ENCODE measurements at regions of chr20 and their contacts with region 1.

Region 1: DNA sequence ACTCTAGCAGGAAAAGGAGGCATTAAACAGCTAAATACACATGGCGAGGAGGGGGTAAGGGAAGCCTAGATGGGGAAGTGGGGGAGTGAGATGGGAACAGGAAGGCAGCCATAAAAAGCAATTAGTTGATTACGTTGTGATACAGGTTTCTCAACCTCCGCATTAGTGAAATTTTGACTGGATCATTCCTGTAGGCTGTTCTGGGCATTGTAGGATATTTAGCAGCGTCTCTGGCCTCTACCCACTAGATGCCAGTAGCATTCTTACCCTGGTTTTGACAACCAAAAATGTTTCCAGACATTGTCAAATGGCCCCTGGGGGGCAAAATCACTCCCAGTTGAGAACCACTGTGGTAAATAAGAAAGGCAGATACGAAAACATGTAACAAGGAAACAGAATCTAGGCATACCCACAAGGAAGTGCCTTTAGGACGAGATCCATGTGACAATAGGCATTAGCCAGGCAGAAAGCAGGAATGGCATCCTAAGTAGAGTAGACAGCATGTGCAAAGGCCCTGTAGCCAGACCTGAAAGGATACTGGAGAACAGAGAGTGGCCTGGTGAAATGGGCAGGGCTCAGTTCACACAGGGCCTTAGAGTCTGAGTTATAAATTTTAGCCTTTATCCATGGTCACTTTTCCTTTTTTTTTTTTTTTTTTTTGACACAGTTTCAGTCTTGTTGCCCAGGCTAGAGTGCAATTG is 25.8 kb upstream of the PTPN1 start:
- DNase-seq: peak in 1 of 14 experiments; percentile 20
- ATAC-seq: no peak
- H3K4me3 ChIP-seq: peak overlapping the region; percentile 60
- H3K4me3 Mint-ChIP-seq: peak overlapping the region; percentile 91
- H3K27ac ChIP-seq: peak overlapping the region in 1 of 2 donors; percentile 82
- H3K27ac Mint-ChIP-seq: peak overlapping the region; percentile 89
- H3K4me1 ChIP-seq: peaks cover 14% of the 10 kb centered on the region
- H3K4me1 Mint-ChIP-seq: peaks cover 25% of the 10 kb centered on the region
- H3K27me3 ChIP-seq: no peaks in the 10 kb centered on the region
- H3K27me3 Mint-ChIP-seq: no peaks in the 10 kb centered on the region
- CTCF ChIP-seq: no peak

Region 2: DNA sequence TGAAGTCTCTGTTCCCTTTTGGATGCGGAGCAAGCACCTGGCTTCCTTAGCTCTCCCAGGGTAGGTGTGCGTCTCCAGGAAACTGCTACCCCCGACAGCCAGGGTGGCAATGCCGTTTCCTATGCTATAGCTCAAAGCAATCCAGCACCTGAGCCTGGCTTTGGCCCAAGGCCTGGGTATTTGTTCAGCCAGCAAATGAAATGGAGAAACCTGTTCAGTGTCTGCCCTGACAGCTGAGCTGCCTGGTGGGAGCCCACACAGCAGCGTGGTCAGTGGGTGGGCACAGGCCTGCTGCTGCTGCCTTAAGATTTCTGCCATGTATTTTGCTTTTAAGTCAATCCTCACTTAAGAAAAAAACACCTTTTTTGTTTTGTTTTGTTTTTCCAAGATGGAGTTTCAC is 582.8 kb before region 1 on chr20:
- CTCF ChIA-PET with region 1: no interaction called
- POLR2A ChIA-PET with region 1: no interaction called
- intact Hi-C with region 1: no loop called
- DNase-seq: peak in 1 of 14 experiments; percentile 2
- ATAC-seq: no peak
- H3K4me3 ChIP-seq: no peak overlapping the region
- H3K4me3 Mint-ChIP-seq: no peak overlapping the region
- H3K27ac ChIP-seq: no peak overlapping the region
- H3K27ac Mint-ChIP-seq: no peak overlapping the region
- H3K4me1 ChIP-seq: no peaks in the 10 kb centered on the region
- H3K4me1 Mint-ChIP-seq: peaks cover 6% of the 10 kb centered on the region
- H3K27me3 ChIP-seq: no peaks in the 10 kb centered on the region
- H3K27me3 Mint-ChIP-seq: no peaks in the 10 kb centered on the region
- CTCF ChIP-seq: no peak

Region 3: GRCh38 chr20:50415516-50416113 is 68.8 kb before region 1 on chr20:
- CTCF ChIA-PET with region 1: no interaction called
- POLR2A ChIA-PET with region 1: no interaction called
- intact Hi-C with region 1: no loop called
- DNase-seq: no peak
- ATAC-seq: no peak
- H3K4me3 ChIP-seq: no peak overlapping the region
- H3K4me3 Mint-ChIP-seq: no peak overlapping the region
- H3K27ac ChIP-seq: no peak overlapping the region
- H3K27ac Mint-ChIP-seq: no peak overlapping the region
- H3K4me1 ChIP-seq: no peaks in the 10 kb centered on the region
- H3K4me1 Mint-ChIP-seq: no peaks in the 10 kb centered on the region
- H3K27me3 ChIP-seq: peaks cover 0 to 3% of the 10 kb centered on the region in 2 experiments
- H3K27me3 Mint-ChIP-seq: peaks cover 5% of the 10 kb centered on the region
- CTCF ChIP-seq: no peak

Region 4: DNA sequence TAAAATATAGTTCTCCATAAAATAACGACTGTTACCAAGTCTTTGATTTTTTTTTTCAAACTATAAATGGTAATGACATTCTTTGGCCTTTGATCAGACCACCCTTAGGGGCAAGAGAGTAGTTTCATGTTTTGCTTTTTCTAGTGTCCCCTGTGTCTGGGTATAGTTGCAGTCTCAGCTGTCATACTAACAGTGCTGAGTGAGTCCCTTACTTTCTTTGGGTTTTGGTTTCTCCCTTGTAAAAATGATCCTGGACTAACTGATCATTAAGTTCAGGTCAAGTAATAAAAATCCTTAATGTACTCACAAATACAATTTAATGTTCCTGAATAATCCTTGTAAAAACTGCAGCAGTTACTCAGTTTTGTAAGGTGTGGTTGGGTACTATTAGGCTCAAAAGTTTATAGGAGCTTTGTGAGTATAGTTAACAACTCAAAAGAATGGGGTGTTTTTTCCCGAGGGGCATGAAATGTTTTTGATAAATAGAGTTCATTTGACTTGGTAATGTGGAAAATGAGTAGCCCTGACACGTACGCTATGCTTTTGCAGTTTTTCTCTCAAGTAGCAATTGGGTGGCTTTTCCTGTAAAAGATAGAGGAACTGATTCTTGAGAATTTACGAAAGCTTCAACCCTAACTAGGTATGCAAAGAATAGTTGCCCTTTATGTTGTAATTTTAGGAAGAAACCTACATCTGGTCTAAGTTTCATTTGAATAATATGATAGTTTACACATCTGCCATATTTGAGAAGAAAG is 31.9 kb after region 1 on chr20:
- CTCF ChIA-PET with region 1: interaction called, 3 read pairs
- POLR2A ChIA-PET with region 1: interaction called, 33 read pairs
- intact Hi-C with region 1: loop called in 1 of 2 experiments (anchors 5 kb)
- DNase-seq: peak in 1 of 14 experiments; percentile 34
- ATAC-seq: no peak
- H3K4me3 ChIP-seq: peak overlapping the region; percentile 6
- H3K4me3 Mint-ChIP-seq: peak overlapping the region; percentile 66
- H3K27ac ChIP-seq: peak overlapping the region; percentile 24 to 78
- H3K27ac Mint-ChIP-seq: peak overlapping the region; percentile 82
- H3K4me1 ChIP-seq: peaks cover 57% of the 10 kb centered on the region
- H3K4me1 Mint-ChIP-seq: peaks cover 100% of the 10 kb centered on the region
- H3K27me3 ChIP-seq: no peaks in the 10 kb centered on the region
- H3K27me3 Mint-ChIP-seq: no peaks in the 10 kb centered on the region
- CTCF ChIP-seq: no peak

Region 5: DNA sequence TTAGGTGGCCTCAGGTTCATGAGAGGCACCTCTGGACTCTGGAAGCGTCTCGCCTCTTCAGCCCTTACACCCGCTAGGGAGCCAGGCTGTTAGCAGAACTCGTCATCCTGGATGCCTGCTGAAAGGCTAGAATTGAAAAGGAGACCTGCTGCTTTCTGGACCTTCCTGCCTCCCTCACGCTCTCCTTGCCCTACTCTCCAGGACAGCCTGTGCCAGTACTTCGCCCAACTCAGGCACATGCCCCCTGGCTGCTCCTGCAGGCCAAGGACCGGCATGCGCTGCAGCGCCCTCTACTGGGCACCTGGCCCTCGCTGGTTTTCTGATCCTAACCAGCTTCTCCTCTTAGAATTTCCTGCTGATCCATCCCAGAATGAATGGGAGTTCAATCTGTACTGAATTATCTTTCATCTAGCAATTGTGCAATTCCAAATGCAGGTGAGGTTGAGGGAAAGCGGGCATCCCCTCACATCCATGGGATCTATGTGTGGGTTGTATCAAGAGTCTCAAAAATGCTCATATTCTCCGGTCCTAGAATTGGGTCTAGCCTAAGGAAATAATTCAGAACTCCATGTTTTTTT is 103.7 kb after region 1 on chr20:
- CTCF ChIA-PET with region 1: interaction called, 11 read pairs
- POLR2A ChIA-PET with region 1: interaction called, 4 read pairs
- intact Hi-C with region 1: no loop called
- DNase-seq: peak; percentile 62 to 83 (median 68)
- ATAC-seq: peak; percentile 79
- H3K4me3 ChIP-seq: no peak overlapping the region
- H3K4me3 Mint-ChIP-seq: no peak overlapping the region
- H3K27ac ChIP-seq: no peak overlapping the region
- H3K27ac Mint-ChIP-seq: peak overlapping the region; percentile 25
- H3K4me1 ChIP-seq: peaks cover 4% of the 10 kb centered on the region
- H3K4me1 Mint-ChIP-seq: peaks cover 6% of the 10 kb centered on the region
- H3K27me3 ChIP-seq: no peaks in the 10 kb centered on the region
- H3K27me3 Mint-ChIP-seq: no peaks in the 10 kb centered on the region
- CTCF ChIP-seq: peak; percentile 94

Measured in CD4-positive, alpha-beta T cell (primary cell).